CD8-positive, alpha-beta memory T cell (primary cell): ENCODE measurements at regions of chr18 and their contacts with region 1.

Region 1: GRCh38 chr18:35355140-35355618 is 11.0 kb upstream of the ZNF24 start:
- DNase-seq: peak; percentile 33 to 76 (median 53)
- H3K4me3 ChIP-seq: no peak overlapping the region
- H3K4me3 Mint-ChIP-seq: no peak overlapping the region
- H3K27ac ChIP-seq: no peak overlapping the region
- H3K27ac Mint-ChIP-seq: peak overlapping the region in 2 of 8 donors; percentile 4 to 36
- H3K4me1 ChIP-seq: no peaks in the 10 kb centered on the region
- H3K4me1 Mint-ChIP-seq: peaks cover 0 to 5% (median 0%) of the 10 kb centered on the region in 3 donors
- H3K27me3 ChIP-seq: no peaks in the 10 kb centered on the region
- H3K27me3 Mint-ChIP-seq: peaks cover 3 to 4% of the 10 kb centered on the region in 2 donors

Region 2: GRCh38 chr18:35231052-35231451 is 124.1 kb before region 1 on chr18:
- CTCF ChIA-PET with region 1: interaction called, 46 read pairs
- POLR2A ChIA-PET with region 1: no interaction called
- DNase-seq: peak; percentile 61 to 84 (median 72)
- H3K4me3 ChIP-seq: peak overlapping the region; percentile 44
- H3K4me3 Mint-ChIP-seq: peak overlapping the region in 6 of 7 donors; percentile 17 to 68 (median 30)
- H3K27ac ChIP-seq: no peak overlapping the region
- H3K27ac Mint-ChIP-seq: peak overlapping the region in 2 of 8 donors; percentile 9 to 22
- H3K4me1 ChIP-seq: no peaks in the 10 kb centered on the region
- H3K4me1 Mint-ChIP-seq: peaks cover 3 to 4% (median 4%) of the 10 kb centered on the region in 3 donors
- H3K27me3 ChIP-seq: no peaks in the 10 kb centered on the region
- H3K27me3 Mint-ChIP-seq: peaks cover 2 to 6% of the 10 kb centered on the region in 2 donors

Region 3: DNA sequence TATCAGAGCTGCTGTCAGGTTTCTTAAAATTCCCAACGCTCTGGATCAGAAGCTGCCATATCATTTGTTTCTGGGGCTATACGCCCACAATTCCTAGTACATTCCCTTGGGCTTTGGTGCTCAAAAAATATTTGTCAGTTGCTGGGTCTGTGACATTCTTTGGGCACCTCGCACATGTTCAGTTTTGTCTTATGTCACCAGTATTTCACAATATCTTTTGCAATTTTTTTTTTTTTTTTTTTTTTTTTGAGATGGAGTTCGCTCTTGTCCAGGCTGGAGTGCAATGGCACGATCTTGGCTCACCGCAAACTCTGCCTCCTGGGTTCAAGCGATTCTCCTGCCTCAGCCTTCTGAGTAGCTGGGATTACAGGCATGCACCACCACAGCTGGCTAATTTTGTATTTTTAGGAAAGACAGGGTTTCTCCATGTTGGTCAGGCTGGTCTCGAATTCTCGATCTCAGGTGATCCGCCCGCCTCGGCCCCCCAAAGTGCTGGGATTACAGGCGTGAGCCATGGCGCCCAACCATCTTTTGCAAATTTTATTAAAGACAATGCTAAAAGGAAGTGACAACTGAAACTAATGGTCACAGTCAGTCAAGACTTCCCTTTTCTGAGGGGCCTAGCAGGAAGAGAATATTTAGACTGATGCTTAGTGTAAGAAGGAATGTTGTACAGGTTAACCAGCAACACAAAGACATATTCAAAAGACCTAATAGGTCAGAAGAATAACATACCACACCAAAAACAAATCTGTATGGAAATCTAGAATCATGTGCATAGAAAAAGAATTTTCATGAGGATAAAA is 107.5 kb before region 1 on chr18:
- CTCF ChIA-PET with region 1: no interaction called
- POLR2A ChIA-PET with region 1: no interaction called
- DNase-seq: no peak
- H3K4me3 ChIP-seq: no peak overlapping the region
- H3K4me3 Mint-ChIP-seq: no peak overlapping the region
- H3K27ac ChIP-seq: no peak overlapping the region
- H3K27ac Mint-ChIP-seq: no peak overlapping the region
- H3K4me1 ChIP-seq: peaks cover 5% of the 10 kb centered on the region
- H3K4me1 Mint-ChIP-seq: peaks cover 13 to 33% (median 25%) of the 10 kb centered on the region in 3 donors
- H3K27me3 ChIP-seq: no peaks in the 10 kb centered on the region
- H3K27me3 Mint-ChIP-seq: no peaks in the 10 kb centered on the region

Region 4: GRCh38 chr18:35369126-35369525 is 13.9 kb after region 1 on chr18:
- CTCF ChIA-PET with region 1: interaction called, 11 read pairs
- POLR2A ChIA-PET with region 1: no interaction called
- DNase-seq: no peak
- H3K4me3 ChIP-seq: no peak overlapping the region
- H3K4me3 Mint-ChIP-seq: no peak overlapping the region
- H3K27ac ChIP-seq: no peak overlapping the region
- H3K27ac Mint-ChIP-seq: peak overlapping the region in 1 of 8 donors; percentile 28
- H3K4me1 ChIP-seq: no peaks in the 10 kb centered on the region
- H3K4me1 Mint-ChIP-seq: no peaks in the 10 kb centered on the region
- H3K27me3 ChIP-seq: no peaks in the 10 kb centered on the region
- H3K27me3 Mint-ChIP-seq: peaks cover 3 to 4% of the 10 kb centered on the region in 2 donors